Head of caudate nucleus (tissue), 42 donors: ENCODE measurements at regions of chr1 and their contacts with region 1.

Region 1: DNA sequence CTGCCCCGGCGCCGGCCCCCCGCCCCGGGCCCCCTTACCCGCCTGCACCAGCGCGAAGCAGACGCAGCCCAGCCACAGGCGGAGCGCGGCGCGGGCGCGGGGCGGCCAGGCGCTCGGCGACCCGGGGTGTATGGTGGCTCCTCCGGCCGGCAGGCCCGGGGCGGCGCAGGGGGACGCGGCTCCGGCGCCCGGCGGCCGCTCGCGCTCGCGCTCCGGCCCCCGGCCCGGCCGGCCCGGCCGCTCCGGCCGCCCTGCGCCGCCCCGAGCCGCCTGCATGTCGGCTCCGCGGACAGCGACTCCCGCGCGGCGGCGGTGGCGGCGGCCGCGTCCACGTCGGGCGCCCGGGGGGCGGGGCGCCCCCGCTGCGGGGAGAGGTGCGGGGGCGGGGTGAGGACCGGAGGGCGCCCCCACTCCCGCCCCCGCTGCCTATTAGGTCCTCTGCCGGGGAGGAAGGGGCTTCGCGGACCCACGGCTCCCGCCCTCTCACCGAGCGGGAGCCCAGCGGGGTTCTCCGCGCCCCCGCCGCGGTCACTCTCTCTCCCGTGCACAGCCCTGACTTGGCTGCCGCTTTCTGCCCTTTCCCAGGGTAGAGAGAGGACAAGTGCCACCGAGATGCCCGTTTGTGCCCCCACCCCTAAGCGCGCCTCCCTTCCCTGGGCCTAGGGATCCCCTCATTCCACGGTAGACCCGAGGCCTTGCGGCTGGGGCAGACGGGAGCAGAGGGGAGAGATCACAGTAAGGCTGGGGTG is at the start of gene FNDC5:
- DNase-seq: peak in 7 of 42 donors; percentile 8 to 43 (median 17)

Region 2: GRCh38 chr1:32684167-32684811 is 186.5 kb before region 1 on chr1:
- intact Hi-C with region 1: no loop called
- DNase-seq: peak in 5 of 42 donors; percentile 36 to 44 (median 39)

Region 3: DNA sequence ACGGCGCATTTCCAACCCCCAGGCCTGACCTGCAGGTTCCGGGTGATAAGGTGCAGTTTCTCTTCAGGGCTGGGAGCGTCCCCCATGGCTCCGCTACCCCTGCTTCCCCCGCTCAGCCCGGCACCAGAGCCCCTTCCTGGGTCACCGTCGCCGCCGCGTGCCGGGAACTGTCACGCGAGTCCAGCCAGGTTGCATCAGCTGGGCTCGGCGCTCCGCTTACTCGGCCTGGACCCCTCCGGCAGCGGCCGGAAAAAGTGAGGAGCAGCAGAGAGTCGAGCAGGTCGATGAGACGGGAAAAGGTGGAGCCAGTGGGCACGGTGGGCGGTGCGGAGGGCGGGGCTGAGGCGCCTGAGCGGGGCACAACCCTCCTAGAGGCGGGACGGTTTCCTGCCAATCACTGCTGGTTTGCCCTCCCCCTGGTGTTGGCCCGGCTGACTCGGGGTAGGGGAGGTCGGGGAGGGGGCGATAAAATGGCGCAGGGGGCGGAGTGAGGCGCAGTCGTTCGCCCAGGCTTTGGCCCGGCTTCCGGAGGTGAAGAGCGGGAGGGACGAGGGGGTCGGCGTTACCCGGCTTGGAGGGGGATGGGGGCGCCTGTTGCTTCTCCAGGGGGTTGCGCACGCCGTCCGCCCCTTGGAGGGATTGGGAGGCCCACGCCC is 53.5 kb before region 1 on chr1 and contains the starts of genes S100PBP and YARS1:
- intact Hi-C with region 1: loop called (anchors 5 kb)
- DNase-seq: peak; percentile 97 to 100 (median 100)

Region 4: DNA sequence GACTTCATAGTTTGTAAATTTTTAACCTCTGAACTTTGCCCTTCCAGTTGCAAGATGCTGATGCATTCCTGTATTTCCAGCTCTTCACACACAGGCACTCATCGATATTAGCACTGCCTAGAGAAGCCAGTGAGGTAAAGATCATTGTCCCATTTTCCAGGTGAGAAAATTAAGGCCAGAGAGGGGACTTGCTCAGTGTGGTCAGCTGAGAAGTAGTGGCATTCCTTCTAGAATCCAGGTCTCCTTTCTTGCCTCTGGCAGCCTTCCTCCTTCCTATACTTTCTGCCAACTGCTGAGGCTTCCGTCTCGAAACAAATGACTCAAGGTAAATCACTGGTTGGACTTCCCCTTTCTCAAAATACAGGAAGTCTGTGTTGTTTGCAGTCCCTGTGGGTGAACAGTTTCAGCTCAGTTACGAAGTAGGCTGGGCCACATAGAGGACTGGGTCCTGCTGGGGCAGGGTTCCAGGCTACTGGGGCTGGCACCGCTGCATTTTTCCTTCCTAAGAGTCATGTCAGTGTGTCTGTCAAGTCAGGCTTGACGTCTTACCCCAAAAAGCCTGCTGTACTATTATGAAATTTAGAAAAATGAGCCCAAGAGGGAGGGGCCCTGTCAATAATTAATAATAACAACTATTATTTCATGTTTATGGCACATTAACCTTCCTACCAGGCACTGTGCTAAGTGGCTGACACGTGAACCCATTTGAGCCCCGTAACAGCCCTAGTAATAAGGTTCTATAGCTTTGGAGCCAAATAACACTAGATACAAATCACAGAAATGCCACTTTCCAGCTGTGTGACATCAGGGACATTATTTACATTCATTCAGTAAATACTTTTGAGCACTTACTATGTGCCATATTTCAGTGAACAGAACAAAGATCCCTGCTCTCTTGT is 110.5 kb after region 1 on chr1:
- intact Hi-C with region 1: no loop called
- DNase-seq: peak in 11 of 42 donors; percentile 15 to 46 (median 34)